ENCODE measurements at regions of chr1 and their contacts with region 1.

Region 1: GRCh38 chr1:155989242-155990004 is 11.1 kb upstream of the ARHGEF2 start:
- DNase-seq: peak; percentile 70 to 86
- ATAC-seq: peak; percentile 92 to 97 (median 97)
- H3K4me3 ChIP-seq: peak overlapping the region; percentile 53
- H3K27ac ChIP-seq: peak overlapping the region; percentile 36
- H3K4me1 ChIP-seq: peaks cover 4% of the 10 kb centered on the region
- H3K27me3 ChIP-seq: no peaks in the 10 kb centered on the region
- CTCF ChIP-seq: peak; percentile 99

Region 2: GRCh38 chr1:155776404-155776803 is 213.0 kb before region 1 on chr1:
- intact Hi-C with region 1: no loop called
- DNase-seq: peak; percentile 31 to 61
- ATAC-seq: peak in 1 of 4 donors; percentile 47
- H3K4me3 ChIP-seq: no peak overlapping the region
- H3K27ac ChIP-seq: no peak overlapping the region
- H3K4me1 ChIP-seq: no peaks in the 10 kb centered on the region
- H3K27me3 ChIP-seq: no peaks in the 10 kb centered on the region
- CTCF ChIP-seq: no peak

Region 3: DNA sequence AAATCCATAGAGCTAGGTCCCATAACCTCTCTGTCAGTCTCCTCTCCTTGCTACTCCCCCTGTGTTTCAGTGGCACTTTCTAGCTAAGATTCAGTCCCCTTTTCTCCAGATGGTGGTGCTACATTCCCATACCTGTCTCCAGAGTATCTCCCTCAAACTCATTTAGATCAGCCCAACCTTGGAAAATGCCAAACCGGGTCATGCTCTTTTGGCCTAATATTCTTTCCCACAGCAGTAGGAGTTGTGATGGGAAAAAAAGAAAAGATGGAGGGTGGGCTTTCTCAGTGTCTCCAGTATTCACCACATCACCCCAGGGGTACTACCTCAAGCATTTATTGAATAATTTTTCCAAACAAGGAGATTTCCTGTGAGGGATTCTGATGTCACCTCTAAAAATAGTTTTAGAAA is 51.2 kb before region 1 on chr1:
- intact Hi-C with region 1: loop called (anchors 1 to 2 kb)
- DNase-seq: no peak
- ATAC-seq: peak in 3 of 4 donors; percentile 35 to 39 (median 36)
- H3K4me3 ChIP-seq: no peak overlapping the region
- H3K27ac ChIP-seq: peak overlapping the region; percentile 40
- H3K4me1 ChIP-seq: peaks cover 16% of the 10 kb centered on the region
- H3K27me3 ChIP-seq: no peaks in the 10 kb centered on the region
- CTCF ChIP-seq: peak; percentile 73